ENCODE measurements at regions of chr3 and their contacts with region 1.

Region 1: GRCh38 chr3:170007031-170007663 is 30.6 kb upstream of the GPR160 start:
- DNase-seq: no peak

Region 2: GRCh38 chr3:170829546-170830272 is 822.6 kb after region 1 on chr3:
- intact Hi-C with region 1: loop called in 1 of 2 experiments (anchors 5 kb)
- DNase-seq: no peak

Measured in posterior vena cava (tissue), 2 donors.